ENCODE measurements at regions of chr13 and their contacts with region 1.

Region 1: DNA sequence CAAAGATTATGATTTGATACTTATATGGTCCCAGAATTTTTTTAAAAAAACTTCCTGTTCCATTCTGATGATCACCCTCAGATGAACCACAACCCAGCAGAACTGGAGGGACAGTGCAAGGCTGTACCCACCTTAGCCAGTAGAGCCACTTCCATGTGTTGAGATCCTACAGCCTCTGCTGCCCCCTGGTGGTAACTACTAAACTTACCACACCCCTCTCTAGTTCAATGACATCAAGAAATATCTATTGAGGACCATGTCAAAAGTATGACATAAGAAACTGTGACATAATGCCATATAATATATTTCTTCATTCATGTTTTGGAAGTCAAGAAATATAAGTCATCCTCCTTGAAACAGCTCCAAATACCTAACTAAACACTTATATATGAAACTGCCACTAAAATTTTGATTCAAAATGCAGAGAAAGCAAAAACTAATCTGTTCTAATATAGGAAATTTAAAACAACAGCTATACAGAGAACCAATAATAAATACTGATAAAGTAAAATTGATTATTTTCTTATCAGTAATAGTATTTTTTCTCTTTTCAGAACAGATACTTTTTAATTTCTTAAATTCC is 412.6 kb downstream of the KCTD12 start:
- DNase-seq: peak in 1 of 2 donors; percentile 87
- H3K4me3 ChIP-seq: no peak overlapping the region
- H3K27ac ChIP-seq: no peak overlapping the region
- H3K4me1 ChIP-seq: no peaks in the 10 kb centered on the region
- H3K27me3 ChIP-seq: no peaks in the 10 kb centered on the region
- CTCF ChIP-seq: peak; percentile 69 to 78 (median 77)

Region 2: GRCh38 chr13:75870397-75870903 is 603.2 kb before region 1 on chr13:
- intact Hi-C with region 1: loop called (anchors 1 kb)
- DNase-seq: no peak
- H3K4me3 ChIP-seq: peak overlapping the region; percentile 39 to 66
- H3K27ac ChIP-seq: peak overlapping the region in 1 of 2 donors; percentile 14
- H3K4me1 ChIP-seq: peaks cover 0 to 3% of the 10 kb centered on the region in 2 donors
- H3K27me3 ChIP-seq: no peaks in the 10 kb centered on the region
- CTCF ChIP-seq: peak; percentile 51 to 84 (median 77)

Region 3: DNA sequence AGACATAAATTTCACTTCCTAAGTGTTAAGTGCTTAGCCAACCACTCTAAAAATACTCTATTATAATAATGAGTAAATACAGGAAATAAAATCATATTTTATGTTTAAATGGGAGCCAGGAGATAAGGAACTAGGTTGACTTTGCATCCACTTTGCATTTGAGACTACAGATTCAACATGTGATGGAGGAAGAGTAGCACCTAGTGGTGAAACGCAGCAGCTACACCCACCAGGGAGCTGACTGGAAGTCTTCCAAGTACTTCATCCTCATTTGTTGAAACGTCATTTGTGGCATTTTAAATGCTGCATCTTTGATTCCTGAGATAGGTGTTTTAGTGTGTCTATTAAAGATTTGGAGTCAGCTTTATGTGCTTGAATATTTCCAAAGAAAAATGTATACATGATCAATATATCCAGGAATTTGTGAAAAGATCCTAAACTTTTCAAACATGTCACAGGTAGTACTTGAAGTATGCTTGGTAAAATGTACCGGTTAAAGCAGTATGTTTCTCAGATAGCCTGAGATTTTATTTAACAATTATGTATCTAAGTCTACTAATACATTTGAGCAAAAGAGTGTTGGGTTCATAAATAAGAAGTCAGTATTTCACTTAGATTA is 430.0 kb after region 1 on chr13:
- intact Hi-C with region 1: loop called (anchors 5 kb)
- DNase-seq: peak in 1 of 2 donors; percentile 85
- H3K4me3 ChIP-seq: no peak overlapping the region
- H3K27ac ChIP-seq: no peak overlapping the region
- H3K4me1 ChIP-seq: no peaks in the 10 kb centered on the region
- H3K27me3 ChIP-seq: no peaks in the 10 kb centered on the region
- CTCF ChIP-seq: peak; percentile 87 to 99 (median 96)